ENCODE measurements at regions of chr7 and their contacts with region 1.

Region 1: DNA sequence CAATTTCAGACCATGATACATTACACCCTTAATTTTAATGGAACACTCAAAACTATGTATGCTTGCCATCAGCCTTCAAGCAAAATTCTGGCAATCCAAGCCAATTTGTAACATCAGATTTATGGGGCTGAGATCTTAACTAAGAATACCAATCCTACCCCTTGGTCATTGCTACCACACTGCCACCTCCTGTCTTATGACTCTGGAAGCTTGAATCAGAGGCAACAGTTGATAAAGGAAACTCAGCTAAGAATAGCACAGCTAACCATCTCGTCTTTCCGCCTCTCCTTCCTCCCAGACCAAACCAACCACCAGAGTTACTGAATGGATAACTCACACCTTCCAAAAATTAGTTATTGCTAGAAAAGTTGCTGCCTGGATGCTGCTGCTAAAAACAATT is 7.4 kb downstream of the IGF2BP3 start:
- DNase-seq: no peak
- H3K4me3 ChIP-seq: no peak overlapping the region
- H3K27ac ChIP-seq: no peak overlapping the region
- H3K4me1 ChIP-seq: no peaks in the 10 kb centered on the region
- H3K27me3 ChIP-seq: peaks cover 9% of the 10 kb centered on the region
- CTCF ChIP-seq: peak; percentile 2 to 54

Region 2: GRCh38 chr7:23261843-23262452 is 200.9 kb before region 1 on chr7:
- CTCF ChIA-PET with region 1: no interaction called
- dilution Hi-C with region 1: no loop called
- in situ Hi-C with region 1: no loop called
- intact Hi-C with region 1: no loop called
- DNase-seq: peak; percentile 29
- H3K4me3 ChIP-seq: no peak overlapping the region
- H3K27ac ChIP-seq: no peak overlapping the region
- H3K4me1 ChIP-seq: no peaks in the 10 kb centered on the region
- H3K27me3 ChIP-seq: no peaks in the 10 kb centered on the region
- CTCF ChIP-seq: peak; percentile 93 to 94

Region 3: GRCh38 chr7:23430893-23431259 is 32.0 kb before region 1 on chr7:
- CTCF ChIA-PET with region 1: no interaction called
- dilution Hi-C with region 1: no loop called
- in situ Hi-C with region 1: no loop called
- intact Hi-C with region 1: loop called (anchors 1 kb)
- DNase-seq: no peak
- H3K4me3 ChIP-seq: no peak overlapping the region
- H3K27ac ChIP-seq: peak overlapping the region; percentile 43
- H3K4me1 ChIP-seq: peaks cover 12% of the 10 kb centered on the region
- H3K27me3 ChIP-seq: no peaks in the 10 kb centered on the region
- CTCF ChIP-seq: no peak

Region 4: DNA sequence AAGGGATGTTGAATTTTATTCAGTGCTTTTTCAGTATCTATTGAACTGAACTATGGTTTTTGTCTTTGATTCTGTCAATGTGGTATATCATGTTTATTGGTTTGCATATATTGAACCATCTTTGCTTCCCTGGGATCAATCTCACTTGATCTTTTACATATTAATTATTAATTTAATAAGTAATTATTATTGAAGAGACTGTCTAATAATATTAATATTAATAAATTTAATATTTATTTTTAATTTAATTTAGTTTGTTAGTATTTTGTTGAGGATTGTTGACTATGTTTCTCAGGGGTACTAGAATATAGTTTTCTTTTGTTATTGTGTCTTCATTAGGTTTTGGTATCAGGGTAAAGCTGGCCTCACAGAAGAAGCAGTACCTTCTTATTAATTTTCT is 95.5 kb after region 1 on chr7:
- CTCF ChIA-PET with region 1: no interaction called
- dilution Hi-C with region 1: no loop called
- in situ Hi-C with region 1: no loop called
- intact Hi-C with region 1: no loop called
- DNase-seq: no peak
- H3K4me3 ChIP-seq: no peak overlapping the region
- H3K27ac ChIP-seq: no peak overlapping the region
- H3K4me1 ChIP-seq: no peaks in the 10 kb centered on the region
- H3K27me3 ChIP-seq: peaks cover 4% of the 10 kb centered on the region
- CTCF ChIP-seq: no peak

Region 5: DNA sequence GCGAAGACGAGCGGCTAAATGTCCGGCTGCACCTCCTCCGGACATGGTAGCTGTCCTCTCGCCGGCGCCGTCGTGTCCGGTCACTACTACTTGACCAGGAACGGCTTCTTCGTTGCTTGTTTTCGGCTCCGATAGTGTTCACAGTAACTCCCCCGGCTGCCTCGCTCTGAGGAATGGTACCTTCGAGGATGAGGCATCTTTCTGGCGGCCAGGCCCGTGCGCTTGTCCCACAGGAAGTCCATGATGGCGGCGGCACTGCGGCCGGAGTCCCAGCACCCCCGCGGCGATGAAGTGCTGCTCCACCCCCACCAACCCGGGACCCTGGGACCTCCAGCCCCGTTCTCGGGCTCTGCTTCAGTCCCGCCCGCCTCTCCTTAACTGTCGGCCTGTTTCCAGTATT is 123.3 kb after region 1 on chr7:
- CTCF ChIA-PET with region 1: no interaction called
- dilution Hi-C with region 1: no loop called
- in situ Hi-C with region 1: no loop called
- intact Hi-C with region 1: no loop called
- DNase-seq: no peak
- H3K4me3 ChIP-seq: no peak overlapping the region
- H3K27ac ChIP-seq: no peak overlapping the region
- H3K4me1 ChIP-seq: no peaks in the 10 kb centered on the region
- H3K27me3 ChIP-seq: peaks cover 3% of the 10 kb centered on the region
- CTCF ChIP-seq: no peak

Region 6: DNA sequence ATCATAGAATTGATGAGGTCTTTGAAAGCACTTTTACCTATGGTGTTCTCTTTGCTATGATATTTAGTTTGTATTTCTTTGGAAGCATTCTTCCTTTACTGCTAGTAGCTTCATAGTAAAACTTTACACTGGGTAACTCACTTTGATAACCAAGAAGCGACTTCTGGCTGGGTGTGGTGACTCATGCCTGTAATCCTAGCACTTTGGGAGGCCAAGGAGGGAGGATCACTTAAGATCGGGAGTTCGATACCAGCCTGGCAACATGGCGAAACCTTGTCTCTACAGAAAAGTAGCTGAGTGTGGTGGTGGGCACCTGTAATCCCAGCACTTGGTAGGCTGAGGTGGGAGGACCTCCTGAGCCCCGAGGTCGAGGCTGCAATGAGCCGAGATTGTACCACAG is 170.6 kb after region 1 on chr7:
- CTCF ChIA-PET with region 1: no interaction called
- dilution Hi-C with region 1: no loop called
- in situ Hi-C with region 1: no loop called
- intact Hi-C with region 1: no loop called
- DNase-seq: no peak
- H3K4me3 ChIP-seq: no peak overlapping the region
- H3K27ac ChIP-seq: no peak overlapping the region
- H3K4me1 ChIP-seq: no peaks in the 10 kb centered on the region
- H3K27me3 ChIP-seq: no peaks in the 10 kb centered on the region
- CTCF ChIP-seq: no peak

Measured in mammary epithelial cell (primary cell).